Right cardiac atrium (tissue), 5 donors: ENCODE measurements at regions of chr6 and their contacts with region 1.

Region 1: GRCh38 chr6:53956068-53956711 is 155.1 kb upstream of the MLIP start:
- DNase-seq: peak; percentile 72 to 87 (median 85)
- ATAC-seq: peak; percentile 92 to 94
- H3K4me3 ChIP-seq: no peak overlapping the region
- H3K27ac ChIP-seq: no peak overlapping the region
- H3K4me1 ChIP-seq: no peaks in the 10 kb centered on the region
- H3K27me3 ChIP-seq: no peaks in the 10 kb centered on the region

Region 2: GRCh38 chr6:53391170-53391569 is 565.0 kb before region 1 on chr6:
- intact Hi-C with region 1: no loop called
- DNase-seq: no peak
- ATAC-seq: no peak
- H3K4me3 ChIP-seq: no peak overlapping the region
- H3K27ac ChIP-seq: no peak overlapping the region
- H3K4me1 ChIP-seq: peaks cover 2% of the 10 kb centered on the region
- H3K27me3 ChIP-seq: no peaks in the 10 kb centered on the region

Region 3: GRCh38 chr6:53725791-53726431 is 230.3 kb before region 1 on chr6:
- intact Hi-C with region 1: loop called in 3 of 4 experiments (anchors 5 to 10 kb)
- DNase-seq: peak; percentile 79 to 92 (median 89)
- ATAC-seq: peak; percentile 85 to 87
- H3K4me3 ChIP-seq: no peak overlapping the region
- H3K27ac ChIP-seq: no peak overlapping the region
- H3K4me1 ChIP-seq: no peaks in the 10 kb centered on the region
- H3K27me3 ChIP-seq: no peaks in the 10 kb centered on the region

Region 4: DNA sequence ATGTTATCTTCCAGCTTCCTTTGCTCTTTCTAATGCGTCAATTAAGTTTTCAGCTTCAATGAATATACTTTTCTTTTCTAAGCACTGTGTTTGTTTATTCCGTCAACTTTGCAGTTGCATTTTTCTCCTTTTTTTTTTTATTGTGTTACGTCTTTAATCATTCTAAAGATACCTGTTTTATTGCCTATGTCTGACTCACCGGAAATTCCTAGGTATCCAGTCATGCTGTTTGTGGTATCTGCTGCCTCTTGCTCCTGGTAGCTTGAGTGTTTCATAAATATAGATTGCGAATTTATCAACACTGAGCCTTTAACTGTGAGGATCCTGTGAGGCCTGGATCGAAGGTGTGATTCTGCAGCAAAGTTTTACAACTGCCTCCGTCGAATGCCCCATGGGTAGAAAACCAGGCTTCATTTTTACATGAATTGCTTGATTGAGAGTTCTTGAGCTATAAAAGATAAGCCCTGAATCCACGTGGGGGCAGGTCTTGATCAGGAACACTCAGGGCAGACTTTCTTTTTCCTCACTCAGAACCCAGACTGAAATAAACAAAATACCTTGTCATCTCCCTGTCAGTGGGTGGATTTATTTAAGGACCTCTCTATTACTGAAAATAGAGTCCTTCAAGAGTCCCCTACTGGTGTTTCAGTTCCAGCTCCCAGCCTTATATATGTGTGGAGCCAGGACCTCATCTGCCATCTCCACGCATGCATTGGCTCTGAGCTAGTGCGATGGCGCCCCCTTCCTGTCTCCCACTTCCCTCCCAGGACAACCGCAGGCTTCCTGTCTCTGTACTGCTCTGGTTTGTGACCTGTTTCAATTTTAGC is 221.5 kb before region 1 on chr6:
- intact Hi-C with region 1: loop called in 3 of 4 experiments (anchors 5 to 10 kb)
- DNase-seq: peak in 2 of 3 donors; percentile 56 to 61
- ATAC-seq: peak in 1 of 2 donors; percentile 45
- H3K4me3 ChIP-seq: no peak overlapping the region
- H3K27ac ChIP-seq: no peak overlapping the region
- H3K4me1 ChIP-seq: no peaks in the 10 kb centered on the region
- H3K27me3 ChIP-seq: no peaks in the 10 kb centered on the region

Region 5: GRCh38 chr6:53794720-53795253 is 161.4 kb before region 1 on chr6 and contains the start of gene LRRC1:
- intact Hi-C with region 1: loop called (anchors 5 to 10 kb)
- DNase-seq: peak; percentile 94 to 97 (median 97)
- ATAC-seq: peak; percentile 93 to 96
- H3K4me3 ChIP-seq: peak within 1 kb of the TSS; percentile 75
- H3K27ac ChIP-seq: peak within 1 kb of the TSS; percentile 32
- H3K4me1 ChIP-seq: no peaks in the 10 kb centered on the region
- H3K27me3 ChIP-seq: no peaks in the 10 kb centered on the region
- total RNA-seq, gene LRRC1: 1.9 to 3.6 (median 3.3) TPM

Region 6: GRCh38 chr6:53869952-53870351 is 86.2 kb before region 1 on chr6:
- intact Hi-C with region 1: no loop called
- DNase-seq: no peak
- ATAC-seq: peak in 1 of 2 donors; percentile 23
- H3K4me3 ChIP-seq: no peak overlapping the region
- H3K27ac ChIP-seq: no peak overlapping the region
- H3K4me1 ChIP-seq: no peaks in the 10 kb centered on the region
- H3K27me3 ChIP-seq: no peaks in the 10 kb centered on the region